ENCODE measurements at regions of chr14 and their contacts with region 1.

Region 1: GRCh38 chr14:68947802-68948201 is 31.3 kb downstream of the ACTN1 start:
- DNase-seq: no peak
- ATAC-seq: no peak
- H3K4me3 ChIP-seq: no peak overlapping the region
- H3K4me3 Mint-ChIP-seq: peak overlapping the region; percentile 43
- H3K27ac ChIP-seq: peak overlapping the region; percentile 7 to 19
- H3K27ac Mint-ChIP-seq: peak overlapping the region; percentile 97
- H3K4me1 ChIP-seq: peaks cover 98% of the 10 kb centered on the region
- H3K4me1 Mint-ChIP-seq: peaks cover 88% of the 10 kb centered on the region
- H3K27me3 ChIP-seq: no peaks in the 10 kb centered on the region
- H3K27me3 Mint-ChIP-seq: no peaks in the 10 kb centered on the region
- CTCF ChIP-seq: no peak

Region 2: GRCh38 chr14:68964300-68965093 is 16.7 kb after region 1 on chr14:
- CTCF ChIA-PET with region 1: interaction called, 11 read pairs
- POLR2A ChIA-PET with region 1: interaction called, 12 read pairs
- intact Hi-C with region 1: loop called (anchors 2 kb)
- DNase-seq: no peak
- ATAC-seq: no peak
- H3K4me3 ChIP-seq: no peak overlapping the region
- H3K4me3 Mint-ChIP-seq: peak overlapping the region; percentile 62
- H3K27ac ChIP-seq: no peak overlapping the region
- H3K27ac Mint-ChIP-seq: peak overlapping the region; percentile 93
- H3K4me1 ChIP-seq: peaks cover 97% of the 10 kb centered on the region
- H3K4me1 Mint-ChIP-seq: peaks cover 97% of the 10 kb centered on the region
- H3K27me3 ChIP-seq: no peaks in the 10 kb centered on the region
- H3K27me3 Mint-ChIP-seq: no peaks in the 10 kb centered on the region
- CTCF ChIP-seq: no peak

Region 3: DNA sequence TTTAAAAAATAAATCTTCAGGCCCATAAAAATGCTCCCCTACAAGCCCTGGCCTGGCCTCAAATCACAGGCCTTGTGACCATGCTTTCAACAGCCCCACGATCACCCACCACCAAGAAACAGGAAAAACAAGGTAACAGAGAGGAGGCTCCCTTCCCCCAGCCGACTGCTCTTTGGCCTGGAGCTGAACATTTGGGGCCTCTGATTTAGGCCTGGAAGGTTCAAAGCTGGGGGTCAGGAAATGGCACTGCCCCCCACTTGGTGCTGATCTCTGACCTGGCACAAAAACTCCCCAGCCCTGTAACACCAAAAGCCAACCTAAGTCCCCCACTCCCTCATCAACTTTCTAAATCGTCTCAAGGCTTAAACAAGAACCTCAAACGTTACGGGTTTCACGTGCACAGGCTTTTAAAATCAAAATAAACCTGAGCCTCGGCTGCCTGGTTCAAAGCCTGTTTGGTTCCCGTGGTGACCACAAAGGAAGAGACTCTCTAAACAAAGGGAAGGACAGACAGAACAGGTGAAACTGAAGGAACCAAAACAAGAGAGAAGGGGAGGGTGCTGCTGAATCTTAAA is 22.3 kb after region 1 on chr14:
- CTCF ChIA-PET with region 1: interaction called, 11 read pairs
- POLR2A ChIA-PET with region 1: interaction called, 10 read pairs
- intact Hi-C with region 1: loop called (anchors 2 kb)
- DNase-seq: peak; percentile 30 to 86 (median 64)
- ATAC-seq: peak; percentile 59
- H3K4me3 ChIP-seq: peak overlapping the region; percentile 3 to 31
- H3K4me3 Mint-ChIP-seq: peak overlapping the region; percentile 81
- H3K27ac ChIP-seq: peak overlapping the region; percentile 67 to 73
- H3K27ac Mint-ChIP-seq: peak overlapping the region; percentile 93
- H3K4me1 ChIP-seq: peaks cover 97% of the 10 kb centered on the region
- H3K4me1 Mint-ChIP-seq: peaks cover 97% of the 10 kb centered on the region
- H3K27me3 ChIP-seq: no peaks in the 10 kb centered on the region
- H3K27me3 Mint-ChIP-seq: no peaks in the 10 kb centered on the region
- CTCF ChIP-seq: no peak

Region 4: DNA sequence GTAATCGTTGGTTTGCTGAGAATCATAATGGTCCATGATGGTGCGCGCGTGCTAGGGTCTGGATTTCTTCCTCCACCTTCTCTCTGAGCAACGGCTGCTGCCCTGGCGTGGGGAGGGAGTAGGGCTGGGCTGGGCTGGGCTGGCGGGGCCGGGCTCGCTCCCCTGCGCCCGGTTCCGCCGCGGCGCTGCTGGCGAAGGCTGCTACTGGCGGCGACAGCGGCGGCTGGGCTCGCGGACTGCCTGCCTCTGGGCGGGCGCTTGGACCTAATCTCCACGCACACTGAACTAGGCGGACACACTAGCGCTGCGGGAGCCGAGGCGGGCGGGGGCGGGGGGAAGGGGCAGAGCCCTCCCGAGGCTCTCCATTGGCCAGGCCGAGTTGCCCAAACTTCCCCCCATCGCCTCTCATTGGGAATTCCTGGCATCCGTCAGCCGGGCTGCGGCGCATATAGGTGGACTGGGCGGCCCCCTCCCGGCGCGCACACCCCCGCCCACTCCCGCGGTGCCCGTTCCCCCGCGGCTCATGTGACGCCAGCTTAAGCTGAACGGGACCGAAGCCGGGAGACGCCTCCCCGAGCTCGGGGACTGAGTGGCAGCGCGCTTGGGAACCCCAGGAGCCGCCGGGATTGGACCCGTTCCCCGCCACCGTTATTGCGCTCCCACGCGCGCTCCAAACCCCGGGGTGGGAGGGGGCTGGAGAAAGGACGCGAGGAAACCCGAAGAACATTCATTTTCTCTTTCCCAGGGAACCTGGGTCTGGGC is 31.4 kb after region 1 on chr14 and contains the start of gene ACTN1:
- CTCF ChIA-PET with region 1: interaction called, 10 read pairs
- POLR2A ChIA-PET with region 1: interaction called, 21 read pairs
- intact Hi-C with region 1: loop called (anchors 2 kb)
- DNase-seq: peak; percentile 22 to 87 (median 72)
- ATAC-seq: peak; percentile 52
- H3K4me3 ChIP-seq: peak within 1 kb of the TSS; percentile 79 to 86
- H3K4me3 Mint-ChIP-seq: peak within 1 kb of the TSS; percentile 94
- H3K27ac ChIP-seq: peak within 1 kb of the TSS; percentile 48 to 70
- H3K27ac Mint-ChIP-seq: peak within 1 kb of the TSS; percentile 93
- H3K4me1 ChIP-seq: peaks cover 45% of the 10 kb centered on the region
- H3K4me1 Mint-ChIP-seq: peaks cover 58% of the 10 kb centered on the region
- H3K27me3 ChIP-seq: no peaks in the 10 kb centered on the region
- H3K27me3 Mint-ChIP-seq: no peaks in the 10 kb centered on the region
- CTCF ChIP-seq: no peak
- total RNA-seq, gene ACTN1: 153 to 161 TPM